WTC11 (cell line): ENCODE measurements at regions of chr1 and their contacts with region 1.

Region 1: DNA sequence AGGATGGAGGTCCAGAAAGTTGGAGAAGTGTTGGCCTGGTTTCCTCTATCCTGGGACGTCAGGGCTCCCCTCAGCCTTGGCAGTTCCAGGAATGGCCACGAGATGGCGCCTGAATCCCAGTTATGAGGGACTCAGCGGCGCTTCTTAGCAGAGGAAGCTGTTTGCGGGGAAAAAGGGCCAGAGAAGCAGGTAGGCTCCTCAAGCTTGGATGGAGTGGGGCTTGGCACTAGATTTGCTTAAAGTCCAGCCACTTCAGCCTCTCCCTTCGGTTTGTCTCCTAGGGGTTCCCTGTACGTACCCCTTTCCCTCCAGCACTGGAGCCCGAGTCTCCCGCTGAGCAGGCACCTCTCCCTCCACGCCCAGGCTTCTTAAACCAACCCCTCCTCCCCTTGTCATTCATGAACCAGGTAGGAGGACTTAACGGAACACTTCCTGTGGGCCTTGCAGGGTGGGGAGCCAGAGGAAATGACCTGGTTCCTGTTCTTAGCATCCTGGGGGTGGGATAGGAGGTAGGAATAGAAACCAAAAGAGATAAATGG is 32.0 kb upstream of the TENT5B start:
- DNase-seq: peak; percentile 97
- ATAC-seq: peak; percentile 78
- H3K4me3 Mint-ChIP-seq: peak overlapping the region; percentile 29
- H3K27ac Mint-ChIP-seq: no peak overlapping the region
- H3K4me1 Mint-ChIP-seq: peaks cover 58% of the 10 kb centered on the region
- H3K27me3 Mint-ChIP-seq: no peaks in the 10 kb centered on the region
- CTCF ChIP-seq: peak; percentile 97

Region 2: DNA sequence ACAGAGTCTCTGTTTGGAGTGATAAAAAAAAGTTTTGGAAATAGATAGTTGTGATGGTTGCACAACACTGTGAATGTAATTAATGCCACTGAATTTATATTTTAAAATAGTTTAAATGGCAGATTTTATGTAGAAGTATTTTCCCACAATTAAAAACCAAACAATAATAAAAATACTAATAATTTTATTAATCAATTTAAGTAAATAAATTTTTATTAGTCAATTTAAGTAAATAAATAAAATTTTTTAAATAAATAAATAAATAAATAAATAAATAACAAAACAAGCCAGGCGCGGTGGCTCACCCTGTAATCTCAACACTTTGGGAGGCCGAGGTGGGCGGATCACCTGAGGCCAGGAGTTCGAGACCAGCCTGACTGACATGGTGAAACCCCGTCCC is 79.5 kb before region 1 on chr1:
- CTCF ChIA-PET with region 1: interaction called, 55 read pairs
- POLR2A ChIA-PET with region 1: no interaction called
- DNase-seq: no peak
- ATAC-seq: no peak
- H3K4me3 Mint-ChIP-seq: no peak overlapping the region
- H3K27ac Mint-ChIP-seq: no peak overlapping the region
- H3K4me1 Mint-ChIP-seq: peaks cover 18% of the 10 kb centered on the region
- H3K27me3 Mint-ChIP-seq: peaks cover 5% of the 10 kb centered on the region
- CTCF ChIP-seq: no peak

Region 3: GRCh38 chr1:27010989-27011764 is 33.5 kb before region 1 on chr1:
- CTCF ChIA-PET with region 1: interaction called, 77 read pairs
- POLR2A ChIA-PET with region 1: interaction called, 9 read pairs
- DNase-seq: peak; percentile 92
- ATAC-seq: peak; percentile 16
- H3K4me3 Mint-ChIP-seq: peak overlapping the region; percentile 88
- H3K27ac Mint-ChIP-seq: peak overlapping the region; percentile 92
- H3K4me1 Mint-ChIP-seq: peaks cover 57% of the 10 kb centered on the region
- H3K27me3 Mint-ChIP-seq: no peaks in the 10 kb centered on the region
- CTCF ChIP-seq: no peak

Region 4: GRCh38 chr1:27071049-27071416 is 26.4 kb after region 1 on chr1:
- CTCF ChIA-PET with region 1: interaction called, 218 read pairs
- POLR2A ChIA-PET with region 1: interaction called, 7 read pairs
- DNase-seq: peak; percentile 49
- ATAC-seq: peak; percentile 63
- H3K4me3 Mint-ChIP-seq: no peak overlapping the region
- H3K27ac Mint-ChIP-seq: no peak overlapping the region
- H3K4me1 Mint-ChIP-seq: peaks cover 15% of the 10 kb centered on the region
- H3K27me3 Mint-ChIP-seq: no peaks in the 10 kb centered on the region
- CTCF ChIP-seq: no peak

Region 5: DNA sequence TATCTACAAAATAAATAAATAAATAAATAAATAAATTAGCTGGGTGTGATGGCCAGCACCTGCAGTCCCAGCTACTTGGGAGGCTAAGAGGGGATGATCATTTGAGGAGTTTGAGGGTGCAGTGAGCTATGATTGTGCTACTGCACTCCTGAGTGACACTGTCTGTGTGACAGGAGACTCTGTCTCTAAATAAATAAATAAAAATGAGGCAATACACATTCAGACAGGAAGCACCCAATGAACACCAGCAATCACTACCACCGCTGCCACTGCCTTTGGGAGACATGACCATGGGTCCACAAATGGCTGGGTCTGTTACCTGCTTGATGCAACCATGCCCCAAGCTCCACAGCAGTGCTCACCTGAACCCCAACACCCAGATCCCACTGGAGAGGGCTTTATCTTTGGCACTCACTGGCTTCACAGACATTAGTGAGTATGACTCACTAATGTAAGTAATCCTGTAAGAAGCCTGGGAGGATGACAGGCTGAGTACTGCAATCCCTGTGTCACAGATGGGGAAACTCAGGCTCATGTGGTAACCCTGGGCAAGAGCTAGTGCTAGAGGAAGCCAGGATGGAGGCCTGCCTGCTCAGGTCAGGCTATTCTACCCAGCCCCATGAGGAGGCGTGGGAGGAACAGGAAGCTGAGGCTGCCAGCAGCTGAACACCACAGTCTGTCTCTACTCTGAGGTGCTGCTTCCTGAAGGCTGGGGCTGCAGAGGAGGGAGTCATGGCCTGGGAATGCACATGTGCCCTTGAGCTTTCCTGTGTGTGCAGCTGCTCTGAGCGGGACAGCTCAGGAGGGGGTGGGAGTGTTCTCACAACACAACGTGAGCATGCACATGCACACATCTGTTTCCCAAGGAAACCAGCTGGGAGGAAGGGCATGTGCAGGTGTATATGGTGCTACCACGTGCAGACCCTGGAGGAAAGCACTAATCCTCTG is 67.2 kb after region 1 on chr1:
- CTCF ChIA-PET with region 1: interaction called, 15 read pairs
- POLR2A ChIA-PET with region 1: no interaction called
- DNase-seq: no peak
- ATAC-seq: peak; percentile 63
- H3K4me3 Mint-ChIP-seq: no peak overlapping the region
- H3K27ac Mint-ChIP-seq: peak overlapping the region; percentile 74
- H3K4me1 Mint-ChIP-seq: peaks cover 7% of the 10 kb centered on the region
- H3K27me3 Mint-ChIP-seq: no peaks in the 10 kb centered on the region
- CTCF ChIP-seq: no peak

Region 6: DNA sequence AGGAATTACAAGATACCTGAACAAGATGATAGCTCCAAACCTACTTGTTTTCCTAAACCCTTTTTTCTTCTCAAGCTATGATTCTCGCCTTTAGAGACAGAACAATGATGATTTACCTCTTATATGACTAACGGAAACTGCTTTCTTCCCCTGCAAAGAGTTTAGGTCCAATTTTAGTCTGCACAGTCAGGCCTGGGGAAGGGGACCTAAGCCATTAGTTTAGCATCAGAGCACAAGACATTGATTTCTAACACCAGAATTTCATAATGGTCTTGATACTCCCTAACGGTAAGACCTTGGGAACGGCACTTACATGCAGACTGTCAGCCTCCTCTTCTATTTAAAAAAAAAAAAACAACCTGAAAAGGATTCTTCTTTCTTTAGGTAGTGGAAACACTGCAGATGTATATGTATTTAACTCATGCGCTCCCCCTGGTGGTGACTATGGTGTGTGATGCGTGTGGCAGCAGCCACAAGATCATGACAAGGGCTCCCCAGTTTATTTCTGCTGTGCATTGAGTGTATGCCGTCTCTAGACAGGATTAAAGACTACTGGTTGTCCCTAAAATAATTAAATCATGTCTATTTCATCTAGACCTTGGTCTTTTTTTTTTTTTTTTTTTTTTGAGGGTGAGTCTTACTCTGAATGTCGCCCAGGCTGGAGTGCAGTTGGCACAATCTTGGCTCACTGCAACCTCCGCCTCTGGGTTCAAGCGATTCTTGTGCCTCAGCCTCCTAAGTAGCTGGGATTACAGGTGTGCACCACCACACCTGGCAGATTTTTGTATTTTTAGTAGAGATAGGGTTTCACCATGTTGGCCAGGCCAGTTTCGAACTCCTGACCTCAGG is 240.0 kb after region 1 on chr1:
- CTCF ChIA-PET with region 1: interaction called, 13 read pairs
- POLR2A ChIA-PET with region 1: no interaction called
- DNase-seq: peak; percentile 90
- ATAC-seq: peak; percentile 88
- H3K4me3 Mint-ChIP-seq: no peak overlapping the region
- H3K27ac Mint-ChIP-seq: peak overlapping the region; percentile 17
- H3K4me1 Mint-ChIP-seq: no peaks in the 10 kb centered on the region; the same call in 1 of the 2 replicates
- H3K27me3 Mint-ChIP-seq: no peaks in the 10 kb centered on the region
- CTCF ChIP-seq: peak; percentile 91